Transverse colon (tissue), 4 donors: ENCODE measurements at regions of chr19 and their contacts with region 1.

Region 1: GRCh38 chr19:46265217-46265828 is 31.5 kb upstream of the HIF3A start:
- DNase-seq: peak; percentile 54
- H3K4me3 ChIP-seq: no peak overlapping the region
- H3K27ac ChIP-seq: no peak overlapping the region
- H3K4me1 ChIP-seq: no peaks in the 10 kb centered on the region
- H3K27me3 ChIP-seq: peaks cover 45% of the 10 kb centered on the region
- CTCF ChIP-seq: peak; percentile 84 to 95 (median 89)
- EP300 ChIP-seq: no peak
- POLR2A ChIP-seq: no peak

Region 2: GRCh38 chr19:45558399-45558878 is 706.9 kb before region 1 on chr19:
- in situ Hi-C with region 1: no loop called
- intact Hi-C with region 1: no loop called
- DNase-seq: peak; percentile 77
- H3K4me3 ChIP-seq: no peak overlapping the region
- H3K27ac ChIP-seq: no peak overlapping the region
- H3K4me1 ChIP-seq: peaks cover 0 to 33% (median 10%) of the 10 kb centered on the region in 4 donors
- H3K27me3 ChIP-seq: no peaks in the 10 kb centered on the region
- CTCF ChIP-seq: peak; percentile 49 to 82 (median 66)
- EP300 ChIP-seq: no peak
- POLR2A ChIP-seq: no peak

Region 3: DNA sequence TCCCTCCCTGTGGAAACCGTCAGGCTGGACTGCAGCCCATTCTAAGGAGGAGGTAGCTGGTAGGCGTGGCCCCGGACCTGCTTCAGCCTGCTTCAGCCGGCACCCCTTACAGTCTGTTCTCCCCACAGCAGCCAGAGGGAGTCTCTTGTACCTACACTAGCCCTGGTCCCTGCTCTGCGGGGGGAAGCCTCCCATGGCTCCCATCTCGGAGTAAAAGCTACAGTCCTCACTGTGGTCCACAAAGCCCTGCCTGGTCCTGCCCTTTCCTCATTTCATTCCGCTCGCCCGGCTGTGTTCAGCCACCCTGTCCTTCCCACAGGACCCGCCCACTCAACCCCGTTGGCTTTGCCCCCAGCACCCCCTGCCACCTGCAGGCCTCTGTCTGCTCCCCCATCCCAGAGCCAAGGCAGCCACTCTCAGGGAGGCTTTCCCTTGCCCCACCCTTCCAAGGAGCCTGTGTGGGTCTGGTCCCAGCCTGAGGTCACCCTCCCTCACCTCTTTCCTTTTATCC is 243.7 kb before region 1 on chr19:
- in situ Hi-C with region 1: loop called in 3 of 4 experiments (anchors 5 to 10 kb)
- intact Hi-C with region 1: no loop called
- DNase-seq: peak; percentile 29
- H3K4me3 ChIP-seq: no peak overlapping the region
- H3K27ac ChIP-seq: no peak overlapping the region
- H3K4me1 ChIP-seq: peaks cover 0 to 7% (median 2%) of the 10 kb centered on the region in 4 donors
- H3K27me3 ChIP-seq: peaks cover 49% of the 10 kb centered on the region
- CTCF ChIP-seq: no peak
- EP300 ChIP-seq: no peak
- POLR2A ChIP-seq: no peak

Region 4: DNA sequence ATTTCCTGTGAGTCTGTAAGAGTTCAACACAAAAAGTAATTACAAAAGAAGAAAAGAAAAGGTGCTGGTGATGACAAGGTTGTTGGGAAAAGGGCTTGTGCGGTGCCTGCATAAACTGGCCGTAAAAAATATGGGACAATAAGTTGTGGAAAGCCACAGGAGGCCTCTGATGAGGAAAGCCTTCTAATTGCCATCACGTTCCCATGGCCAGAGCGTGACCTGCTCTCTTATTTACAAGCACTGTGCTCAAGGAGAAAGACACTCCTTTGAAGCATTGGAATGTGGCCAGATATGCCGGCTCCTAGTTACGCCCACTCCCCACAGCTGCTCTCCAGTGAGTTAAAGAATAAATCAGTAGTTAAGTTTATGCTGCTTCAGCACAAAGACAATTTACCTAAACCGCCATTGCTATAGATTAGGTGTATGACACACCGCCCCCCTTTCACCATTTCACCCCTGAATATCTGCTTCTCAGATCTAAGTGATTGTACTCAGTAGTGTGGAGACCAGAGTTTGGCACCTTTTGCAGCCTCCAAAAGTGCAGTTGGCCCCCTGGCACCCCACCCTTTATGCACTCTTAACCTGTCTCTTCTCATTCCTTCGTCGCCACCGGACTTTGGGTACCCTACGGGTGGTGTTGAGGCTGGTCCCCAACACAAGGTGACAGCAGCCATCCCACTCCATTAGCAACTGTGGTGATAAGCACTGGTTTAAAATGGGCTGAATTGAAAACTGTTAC is 234.3 kb before region 1 on chr19:
- in situ Hi-C with region 1: loop called in 3 of 4 experiments (anchors 5 to 10 kb)
- intact Hi-C with region 1: loop called (anchors 2 kb)
- DNase-seq: no peak
- H3K4me3 ChIP-seq: no peak overlapping the region
- H3K27ac ChIP-seq: no peak overlapping the region
- H3K4me1 ChIP-seq: no peaks in the 10 kb centered on the region
- H3K27me3 ChIP-seq: peaks cover 18% of the 10 kb centered on the region
- CTCF ChIP-seq: no peak
- EP300 ChIP-seq: no peak
- POLR2A ChIP-seq: no peak

Region 5: DNA sequence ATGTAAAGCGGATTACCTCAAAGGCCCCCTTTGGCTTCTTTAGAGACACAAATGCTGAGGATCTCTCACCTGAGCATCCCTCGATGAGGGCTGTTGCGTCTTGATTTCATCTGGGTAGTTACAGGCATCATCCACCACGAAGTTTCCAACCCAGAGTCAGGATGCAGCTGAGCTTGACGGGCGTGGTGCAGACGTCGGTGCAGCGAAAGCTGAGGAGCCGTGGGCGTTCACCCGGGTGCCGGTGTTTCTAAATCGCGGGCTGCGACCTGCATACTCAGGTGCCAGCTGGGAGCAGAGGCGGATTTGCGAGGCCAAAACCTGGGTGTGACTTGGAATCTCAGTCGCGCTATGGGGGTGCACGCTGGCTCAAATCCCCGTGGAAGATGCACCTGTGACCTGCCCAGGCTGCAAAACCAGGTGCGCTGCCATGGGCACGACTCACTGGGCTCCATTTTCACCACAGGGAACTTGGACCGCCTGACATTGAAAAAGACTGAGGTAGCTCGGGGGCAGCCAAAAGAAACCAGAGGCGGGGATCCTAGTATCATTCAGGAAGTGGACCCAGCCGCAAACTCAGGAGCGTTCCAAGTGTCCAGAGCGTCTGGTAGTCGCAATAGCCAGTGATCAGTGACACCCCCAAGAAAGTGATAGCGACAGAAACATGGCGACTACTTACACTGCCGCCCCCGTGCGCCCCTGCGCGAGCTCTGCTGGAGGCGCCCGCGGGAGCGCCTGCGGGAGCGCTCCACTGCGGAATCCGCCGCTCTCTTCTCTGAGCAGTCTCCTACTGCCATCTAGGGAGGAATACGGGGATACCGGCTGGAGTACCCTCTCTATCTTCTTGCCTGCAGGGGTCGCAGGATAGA is 188.1 kb before region 1 on chr19:
- in situ Hi-C with region 1: loop called (anchors 10 to 25 kb)
- intact Hi-C with region 1: loop called (anchors 5 kb)
- DNase-seq: peak; percentile 57
- H3K4me3 ChIP-seq: peak overlapping the region in 3 of 4 donors; percentile 15 to 43 (median 16)
- H3K27ac ChIP-seq: no peak overlapping the region
- H3K4me1 ChIP-seq: peaks cover 0 to 14% (median 8%) of the 10 kb centered on the region in 4 donors
- H3K27me3 ChIP-seq: peaks cover 62% of the 10 kb centered on the region
- CTCF ChIP-seq: peak; percentile 62 to 85 (median 79)
- EP300 ChIP-seq: no peak
- POLR2A ChIP-seq: no peak

Region 6: GRCh38 chr19:46250076-46250735 is 15.1 kb before region 1 on chr19:
- in situ Hi-C with region 1: no loop called
- intact Hi-C with region 1: loop called (anchors 1 kb)
- DNase-seq: no peak
- H3K4me3 ChIP-seq: no peak overlapping the region
- H3K27ac ChIP-seq: no peak overlapping the region
- H3K4me1 ChIP-seq: no peaks in the 10 kb centered on the region
- H3K27me3 ChIP-seq: peaks cover 51% of the 10 kb centered on the region
- CTCF ChIP-seq: no peak
- EP300 ChIP-seq: no peak
- POLR2A ChIP-seq: no peak